Left cardiac atrium (tissue), 4 donors: ENCODE measurements at regions of chr15 and their contacts with region 1.

Region 1: DNA sequence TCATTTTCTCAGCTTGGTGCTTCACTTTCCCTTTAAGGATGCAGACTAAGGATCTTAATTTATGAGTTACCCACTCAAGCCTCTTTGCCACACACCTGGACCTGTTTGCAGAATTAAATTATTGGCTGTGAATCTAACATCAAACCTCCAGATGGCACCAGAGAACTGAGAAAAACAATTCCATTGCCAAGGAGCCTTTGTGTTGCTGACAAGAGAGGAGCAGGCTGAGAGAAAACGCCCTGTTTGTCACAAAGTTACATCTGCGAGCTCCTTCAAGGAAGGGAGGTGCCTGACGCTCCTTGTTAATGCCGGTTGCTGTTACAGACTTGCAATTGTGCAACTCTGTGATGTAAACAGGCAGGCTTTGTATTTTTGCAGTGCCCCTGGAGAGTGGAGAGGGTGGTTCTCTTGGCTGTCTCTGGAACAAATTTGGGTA is 36.3 kb upstream of the TMC3 start:
- DNase-seq: peak; percentile 60
- ATAC-seq: peak; percentile 85 to 87

Region 2: GRCh38 chr15:82197733-82198594 is 787.6 kb after region 1 on chr15:
- intact Hi-C with region 1: loop called in 1 of 2 experiments (anchors 5 kb)
- DNase-seq: peak; percentile 65
- ATAC-seq: peak; percentile 89 to 92